Caco-2 (cell line): ENCODE measurements at regions of chr17 and their contacts with region 1.

Region 1: GRCh38 chr17:80673152-80673920 is 128.7 kb downstream of the RPTOR start:
- DNase-seq: peak in 1 of 2 experiments; percentile 58
- H3K4me3 ChIP-seq: no peak overlapping the region
- H3K4me3 Mint-ChIP-seq: no peak overlapping the region
- H3K27ac Mint-ChIP-seq: no peak overlapping the region
- H3K4me1 ChIP-seq: peaks cover 20% of the 10 kb centered on the region
- H3K4me1 Mint-ChIP-seq: peaks cover 30% of the 10 kb centered on the region
- H3K27me3 ChIP-seq: no peaks in the 10 kb centered on the region
- H3K27me3 Mint-ChIP-seq: no peaks in the 10 kb centered on the region
- CTCF ChIP-seq: no peak

Region 2: DNA sequence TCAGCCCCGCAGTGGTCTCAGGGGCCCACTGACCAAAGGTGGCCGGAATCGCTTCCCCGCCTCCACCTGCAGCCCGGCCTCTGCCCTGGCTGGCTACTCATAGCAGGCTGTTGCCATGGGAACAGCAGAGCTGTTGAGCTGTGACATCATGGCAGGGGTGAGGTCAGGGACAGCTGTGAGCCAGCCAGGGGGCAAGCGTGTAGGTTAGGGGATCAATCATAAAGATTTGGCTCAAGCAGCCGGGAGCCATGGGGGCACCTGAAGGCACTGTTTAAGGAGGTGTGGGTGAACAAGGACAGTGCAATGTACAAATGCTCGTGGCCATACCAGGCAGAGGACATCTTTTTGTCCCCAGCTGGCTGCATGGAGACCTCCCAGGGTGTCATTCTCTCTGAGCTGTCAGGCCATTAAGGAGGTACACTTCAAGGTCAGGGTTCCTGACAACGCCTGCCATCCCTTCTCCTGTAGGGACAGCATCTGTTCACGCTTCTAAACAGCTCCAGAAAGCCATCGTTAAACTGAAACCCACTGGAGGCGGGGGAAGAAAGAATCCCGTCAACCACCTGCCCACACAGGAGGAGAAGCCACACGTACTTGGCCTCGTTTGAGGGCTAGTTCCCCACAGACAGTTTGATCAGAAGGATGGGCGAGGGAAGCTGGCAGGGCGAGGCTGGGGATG is 1770.1 kb before region 1 on chr17 and contains the start of gene CEP295NL:
- CTCF ChIA-PET with region 1: no interaction called
- POLR2A ChIA-PET with region 1: no interaction called
- intact Hi-C with region 1: loop called (anchors 5 kb)
- DNase-seq: peak in 1 of 2 experiments; percentile 47
- H3K4me3 ChIP-seq: no peak within 1 kb of the TSS
- H3K4me3 Mint-ChIP-seq: no peak within 1 kb of the TSS
- H3K27ac Mint-ChIP-seq: peak within 1 kb of the TSS; percentile 88
- H3K4me1 ChIP-seq: peaks cover 24% of the 10 kb centered on the region
- H3K4me1 Mint-ChIP-seq: peaks cover 45% of the 10 kb centered on the region
- H3K27me3 ChIP-seq: no peaks in the 10 kb centered on the region
- H3K27me3 Mint-ChIP-seq: no peaks in the 10 kb centered on the region
- CTCF ChIP-seq: no peak
- total RNA-seq, gene CEP295NL: 1.7 and 2.0 TPM in 2 replicates